Astrocyte of the cerebellum (primary cell): ENCODE measurements at regions of chr22 and their contacts with region 1.

Region 1: GRCh38 chr22:29016067-29016938 is 45.3 kb downstream of the C22orf31 start:
- DNase-seq: no peak
- H3K4me3 ChIP-seq: no peak overlapping the region
- CTCF ChIP-seq: no peak

Region 2: GRCh38 chr22:28935713-28936112 is 80.6 kb before region 1 on chr22:
- in situ Hi-C with region 1: loop called (anchors 5 kb)
- DNase-seq: no peak
- H3K4me3 ChIP-seq: no peak overlapping the region
- CTCF ChIP-seq: peak; percentile 39